ENCODE measurements at regions of chr15 and their contacts with region 1.

Region 1: GRCh38 chr15:25345943-25346342 is 92.9 kb downstream of the UBE3A start:
- DNase-seq: peak; percentile 44 to 83
- ATAC-seq: peak; percentile 94 to 99 (median 99)
- H3K4me3 ChIP-seq: peak overlapping the region; percentile 47
- H3K27ac ChIP-seq: peak overlapping the region; percentile 68
- H3K4me1 ChIP-seq: peaks cover 18% of the 10 kb centered on the region
- H3K27me3 ChIP-seq: no peaks in the 10 kb centered on the region
- CTCF ChIP-seq: peak; percentile 44

Region 2: GRCh38 chr15:25422021-25422420 is 76.1 kb after region 1 on chr15:
- intact Hi-C with region 1: loop called in 1 of 2 experiments (anchors 5 kb)
- DNase-seq: no peak
- ATAC-seq: no peak
- H3K4me3 ChIP-seq: no peak overlapping the region
- H3K27ac ChIP-seq: no peak overlapping the region
- H3K4me1 ChIP-seq: peaks cover 57% of the 10 kb centered on the region
- H3K27me3 ChIP-seq: no peaks in the 10 kb centered on the region
- CTCF ChIP-seq: no peak

Region 3: DNA sequence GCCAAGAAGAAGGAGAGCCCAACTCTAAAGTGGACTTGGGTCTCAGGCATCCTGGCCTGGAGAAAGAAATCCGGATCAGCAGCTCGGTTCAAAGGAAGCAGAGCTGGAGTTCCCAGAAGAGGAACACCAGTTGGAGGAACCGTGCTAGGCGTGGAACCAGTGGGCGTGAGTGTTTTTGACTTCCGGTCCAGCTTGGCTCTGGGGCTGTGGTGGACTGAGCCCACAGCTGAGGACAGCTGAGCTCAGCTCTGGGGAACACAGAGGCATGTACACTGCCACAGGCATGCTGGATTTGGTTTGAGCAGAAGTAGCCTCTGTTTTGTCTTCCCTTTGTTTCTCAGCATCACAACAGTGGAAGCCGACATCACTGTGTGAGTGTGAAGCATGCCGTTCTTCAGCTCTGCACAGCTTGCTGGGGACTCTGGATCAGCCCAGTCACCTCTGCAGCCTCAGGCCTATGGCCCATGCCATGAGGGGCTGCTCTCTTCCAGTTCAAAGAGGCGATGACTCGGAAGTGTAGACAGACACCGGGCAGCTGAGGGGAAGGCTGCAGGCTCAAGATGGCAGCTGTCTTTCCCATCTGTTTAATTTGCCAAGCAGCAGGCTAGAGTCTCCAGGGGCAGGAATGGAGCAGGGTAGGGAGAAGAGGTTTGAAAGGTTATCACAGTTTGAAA is 278.7 kb after region 1 on chr15:
- intact Hi-C with region 1: no loop called
- DNase-seq: peak in 1 of 2 donors; percentile 21
- ATAC-seq: no peak
- H3K4me3 ChIP-seq: no peak overlapping the region
- H3K27ac ChIP-seq: no peak overlapping the region
- H3K4me1 ChIP-seq: no peaks in the 10 kb centered on the region
- H3K27me3 ChIP-seq: no peaks in the 10 kb centered on the region
- CTCF ChIP-seq: no peak